Right cardiac atrium (tissue), 5 donors: ENCODE measurements at regions of chr5 and their contacts with region 1.

Region 1: GRCh38 chr5:169064093-169064492 is 236.8 kb downstream of the SLIT3 start:
- DNase-seq: peak in 1 of 3 donors; percentile 21
- ATAC-seq: peak; percentile 10 to 33
- H3K4me3 ChIP-seq: no peak overlapping the region
- H3K27ac ChIP-seq: no peak overlapping the region
- H3K4me1 ChIP-seq: peaks cover 2% of the 10 kb centered on the region
- H3K27me3 ChIP-seq: no peaks in the 10 kb centered on the region

Region 2: GRCh38 chr5:169003721-169004541 is 60.2 kb before region 1 on chr5:
- intact Hi-C with region 1: loop called in 1 of 4 experiments (anchors 10 kb)
- DNase-seq: peak in 2 of 3 donors; percentile 62 to 69
- ATAC-seq: peak; percentile 61 to 76
- H3K4me3 ChIP-seq: no peak overlapping the region
- H3K27ac ChIP-seq: peak overlapping the region; percentile 37
- H3K4me1 ChIP-seq: peaks cover 4% of the 10 kb centered on the region
- H3K27me3 ChIP-seq: no peaks in the 10 kb centered on the region

Region 3: DNA sequence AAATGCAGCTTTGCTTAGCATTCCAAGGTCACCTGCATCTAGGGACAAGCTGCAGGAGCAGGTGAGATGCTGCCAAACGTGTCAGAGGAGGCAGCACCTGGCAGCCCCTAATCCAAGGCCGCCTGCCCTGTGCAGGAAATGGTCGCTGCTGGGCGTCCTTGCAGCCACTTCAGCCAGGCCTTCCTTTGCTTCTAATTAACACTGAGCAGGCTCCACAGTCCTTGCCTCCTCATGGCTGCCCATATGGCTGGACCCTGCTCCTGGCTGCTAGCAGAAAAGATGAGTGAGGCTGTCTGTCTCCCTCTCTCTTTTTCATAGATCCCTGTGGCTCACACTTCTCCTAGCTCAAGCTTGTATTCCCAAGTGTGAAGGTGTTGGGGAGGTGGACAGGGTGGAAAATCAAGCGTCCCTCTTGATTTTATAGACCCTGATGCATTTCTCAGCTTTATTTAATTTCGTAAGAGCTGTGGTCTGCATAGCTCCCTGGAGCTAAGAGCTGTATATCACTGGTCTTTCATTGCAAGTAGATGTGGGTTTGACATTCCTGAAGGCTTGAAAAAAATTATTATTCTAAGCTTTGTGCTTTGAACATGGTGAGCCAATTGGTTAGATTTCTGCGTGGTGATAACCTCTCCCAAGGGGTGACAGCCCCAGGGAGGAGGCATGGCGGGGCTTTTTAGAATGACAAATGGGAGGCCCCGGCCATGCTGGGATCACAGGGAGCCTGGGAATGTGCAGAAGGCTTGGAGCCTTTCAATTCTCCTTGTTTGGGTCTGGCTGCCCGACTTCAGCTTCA is 43.0 kb after region 1 on chr5:
- intact Hi-C with region 1: no loop called
- DNase-seq: peak in 2 of 3 donors; percentile 17 to 54
- ATAC-seq: peak in 1 of 2 donors; percentile 40
- H3K4me3 ChIP-seq: no peak overlapping the region
- H3K27ac ChIP-seq: no peak overlapping the region
- H3K4me1 ChIP-seq: no peaks in the 10 kb centered on the region
- H3K27me3 ChIP-seq: no peaks in the 10 kb centered on the region